ENCODE measurements at regions of chr6 and their contacts with region 1.

Region 1: GRCh38 chr6:125906158-125906998 is 50.2 kb upstream of the HINT3 start:
- DNase-seq: peak; percentile 23
- ATAC-seq: peak; percentile 75
- H3K4me3 Mint-ChIP-seq: no peak overlapping the region
- H3K27ac Mint-ChIP-seq: no peak overlapping the region
- H3K4me1 Mint-ChIP-seq: peaks cover 4% of the 10 kb centered on the region
- H3K27me3 Mint-ChIP-seq: no peaks in the 10 kb centered on the region
- CTCF ChIP-seq: no peak

Region 2: GRCh38 chr6:125827788-125828320 is 78.5 kb before region 1 on chr6:
- CTCF ChIA-PET with region 1: no interaction called
- POLR2A ChIA-PET with region 1: interaction called, 10 read pairs
- intact Hi-C with region 1: no loop called
- DNase-seq: no peak
- ATAC-seq: no peak
- H3K4me3 Mint-ChIP-seq: no peak overlapping the region
- H3K27ac Mint-ChIP-seq: no peak overlapping the region
- H3K4me1 Mint-ChIP-seq: peaks cover 22% of the 10 kb centered on the region
- H3K27me3 Mint-ChIP-seq: no peaks in the 10 kb centered on the region
- CTCF ChIP-seq: no peak